ENCODE measurements at regions of chr11 and their contacts with region 1.

Region 1: GRCh38 chr11:57527056-57527631 is 3.4 kb downstream of the TIMM10 start:
- DNase-seq: peak; percentile 70 to 74
- H3K4me3 ChIP-seq: no peak overlapping the region
- H3K27ac ChIP-seq: no peak overlapping the region
- H3K4me1 ChIP-seq: peaks cover 0 to 15% (median 11%) of the 10 kb centered on the region in 4 donors
- H3K27me3 ChIP-seq: no peaks in the 10 kb centered on the region
- CTCF ChIP-seq: peak; percentile 91 to 94

Region 2: DNA sequence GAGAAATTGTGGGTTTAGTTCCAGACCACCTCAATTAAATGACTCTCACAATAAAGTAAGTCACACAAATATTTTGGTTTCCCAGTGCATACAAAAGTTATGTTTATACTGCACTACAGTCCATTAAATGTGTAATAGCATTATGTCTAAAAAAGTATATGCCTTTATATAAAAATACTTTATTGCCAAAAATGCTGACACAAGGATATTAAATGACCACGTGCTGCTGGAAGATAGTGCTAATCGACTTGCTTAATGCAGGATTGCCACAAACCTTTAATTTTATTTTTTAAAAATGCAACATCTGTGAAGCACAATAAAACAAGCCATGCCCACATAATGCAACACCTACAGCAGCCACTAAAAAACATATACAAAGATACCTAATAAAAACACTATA is 511.5 kb before region 1 on chr11:
- intact Hi-C with region 1: no loop called
- DNase-seq: no peak
- H3K4me3 ChIP-seq: no peak overlapping the region
- H3K27ac ChIP-seq: no peak overlapping the region
- H3K4me1 ChIP-seq: no peaks in the 10 kb centered on the region
- H3K27me3 ChIP-seq: no peaks in the 10 kb centered on the region
- CTCF ChIP-seq: no peak

Region 3: GRCh38 chr11:57345555-57346211 is 181.5 kb before region 1 on chr11:
- intact Hi-C with region 1: loop called (anchors 5 kb)
- DNase-seq: peak in 1 of 2 donors; percentile 74
- H3K4me3 ChIP-seq: no peak overlapping the region
- H3K27ac ChIP-seq: no peak overlapping the region
- H3K4me1 ChIP-seq: peaks cover 0 to 9% (median 4%) of the 10 kb centered on the region in 4 donors
- H3K27me3 ChIP-seq: peaks cover 0 to 4% of the 10 kb centered on the region in 2 donors
- CTCF ChIP-seq: peak; percentile 57 to 75

Region 4: GRCh38 chr11:57456960-57457642 is 70.0 kb before region 1 on chr11:
- intact Hi-C with region 1: loop called (anchors 2 kb)
- DNase-seq: peak; percentile 92 to 94
- H3K4me3 ChIP-seq: no peak overlapping the region
- H3K27ac ChIP-seq: no peak overlapping the region
- H3K4me1 ChIP-seq: peaks cover 0 to 43% (median 38%) of the 10 kb centered on the region in 4 donors
- H3K27me3 ChIP-seq: peaks cover 0 to 63% of the 10 kb centered on the region in 2 donors
- CTCF ChIP-seq: peak; percentile 97 to 98

Region 5: DNA sequence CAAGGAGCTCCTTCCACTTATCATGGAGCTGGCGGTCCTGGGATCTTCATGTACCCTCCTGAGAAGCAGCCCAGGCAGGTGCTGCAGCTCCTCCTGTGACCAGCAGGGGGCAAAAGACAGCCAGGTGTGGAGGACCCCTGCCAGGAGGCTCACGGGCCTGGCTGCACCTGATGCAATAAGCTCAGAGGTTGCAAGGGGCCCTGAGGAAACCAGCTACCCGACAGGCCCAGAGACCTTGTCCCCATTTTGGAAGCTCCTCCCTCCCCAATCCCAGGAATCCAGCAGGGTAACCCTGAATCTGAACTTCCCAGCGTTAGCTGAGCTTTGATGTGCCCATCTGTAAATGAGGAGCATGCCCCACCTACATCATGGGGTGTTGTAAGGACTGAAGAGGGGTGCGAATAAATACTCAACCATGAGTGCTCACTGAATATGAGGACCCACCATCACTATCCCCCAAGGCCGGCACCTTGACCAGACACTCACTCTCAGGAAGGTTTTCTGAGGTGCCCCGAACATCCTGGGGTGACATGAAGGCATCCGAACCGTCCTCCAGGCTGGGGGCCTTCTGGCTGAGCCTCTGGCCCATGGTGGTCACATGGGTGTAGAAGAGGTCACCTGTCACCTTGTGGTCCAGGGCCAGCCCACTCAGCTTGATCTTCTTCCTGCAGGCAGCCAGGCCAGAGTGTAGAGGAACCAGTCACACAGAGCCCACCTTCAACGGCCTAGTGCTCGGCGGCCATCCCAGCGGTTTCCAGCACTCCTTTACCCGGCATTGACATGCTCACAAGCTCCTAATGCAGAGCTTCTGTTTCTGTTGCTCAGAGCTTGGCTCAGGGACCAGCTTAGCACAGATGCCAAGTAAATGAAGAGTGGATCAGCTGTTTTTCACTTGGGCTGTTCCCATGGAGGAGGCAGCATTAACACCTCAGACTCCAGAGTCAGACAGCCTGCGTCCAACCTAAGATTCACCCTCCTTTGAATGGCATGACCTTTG is 33.3 kb before region 1 on chr11:
- intact Hi-C with region 1: loop called (anchors 2 kb)
- DNase-seq: no peak
- H3K4me3 ChIP-seq: no peak overlapping the region
- H3K27ac ChIP-seq: no peak overlapping the region
- H3K4me1 ChIP-seq: peaks cover 0 to 5% (median 2%) of the 10 kb centered on the region in 4 donors
- H3K27me3 ChIP-seq: no peaks in the 10 kb centered on the region
- CTCF ChIP-seq: peak; percentile 82 to 91